CD4-positive, alpha-beta memory T cell (primary cell): ENCODE measurements at regions of chr12 and their contacts with region 1.

Region 1: GRCh38 chr12:71663561-71664294 is at the start of gene ZFC3H1:
- DNase-seq: peak; percentile 95 to 98 (median 97)
- H3K4me3 ChIP-seq: peak within 1 kb of the TSS; percentile 92 to 95
- H3K4me3 Mint-ChIP-seq: peak within 1 kb of the TSS; percentile 97 to 100 (median 99)
- H3K27ac ChIP-seq: peak within 1 kb of the TSS; percentile 96
- H3K27ac Mint-ChIP-seq: peak within 1 kb of the TSS; percentile 98 to 100 (median 100)
- H3K4me1 ChIP-seq: peaks cover 41% of the 10 kb centered on the region
- H3K4me1 Mint-ChIP-seq: peaks cover 30 to 69% (median 44%) of the 10 kb centered on the region in 4 donors
- H3K27me3 ChIP-seq: no peaks in the 10 kb centered on the region
- H3K27me3 Mint-ChIP-seq: no peaks in the 10 kb centered on the region
- total RNA-seq, gene ZFC3H1: 118 to 121 TPM

Region 2: DNA sequence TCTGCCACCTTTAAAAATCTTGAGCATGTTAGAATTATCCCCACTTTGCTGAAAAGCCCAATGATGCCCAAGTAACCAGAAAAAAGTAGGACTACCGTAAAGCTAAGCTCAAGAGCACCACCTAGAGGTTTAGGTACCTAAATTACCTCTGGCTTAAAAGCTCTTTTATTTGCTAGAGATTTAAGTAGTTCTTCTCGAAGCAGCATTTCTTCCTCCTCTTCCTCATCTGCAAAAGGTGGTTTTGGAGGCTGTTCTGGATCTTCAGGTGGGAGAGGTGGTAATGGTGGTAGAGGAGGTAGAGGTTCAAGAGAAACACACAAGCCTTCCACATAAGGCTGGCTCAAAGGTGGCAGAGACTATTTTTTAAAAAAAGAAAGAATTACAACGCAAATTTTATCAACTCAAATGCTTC is 27.0 kb before region 1 on chr12:
- CTCF ChIA-PET with region 1: interaction called, 28 read pairs
- POLR2A ChIA-PET with region 1: interaction called, 6 read pairs
- intact Hi-C with region 1: loop called (anchors 2 kb)
- DNase-seq: peak in 4 of 5 donors; percentile 52 to 59 (median 53)
- H3K4me3 ChIP-seq: no peak overlapping the region
- H3K4me3 Mint-ChIP-seq: no peak overlapping the region
- H3K27ac ChIP-seq: no peak overlapping the region
- H3K27ac Mint-ChIP-seq: peak overlapping the region; percentile 25 to 94 (median 83)
- H3K4me1 ChIP-seq: no peaks in the 10 kb centered on the region
- H3K4me1 Mint-ChIP-seq: peaks cover 6 to 17% (median 9%) of the 10 kb centered on the region in 4 donors
- H3K27me3 ChIP-seq: no peaks in the 10 kb centered on the region
- H3K27me3 Mint-ChIP-seq: no peaks in the 10 kb centered on the region

Region 3: GRCh38 chr12:71685914-71686665 is 22.4 kb after region 1 on chr12 and contains the start of gene TMEM19:
- CTCF ChIA-PET with region 1: interaction called, 60 read pairs
- POLR2A ChIA-PET with region 1: interaction called, 233 read pairs
- intact Hi-C with region 1: loop called (anchors 1 kb)
- DNase-seq: peak; percentile 82 to 86 (median 84)
- H3K4me3 ChIP-seq: peak within 1 kb of the TSS; percentile 47 to 73
- H3K4me3 Mint-ChIP-seq: peak within 1 kb of the TSS; percentile 92 to 99 (median 96)
- H3K27ac ChIP-seq: peak within 1 kb of the TSS; percentile 72
- H3K27ac Mint-ChIP-seq: peak within 1 kb of the TSS; percentile 80 to 98 (median 95)
- H3K4me1 ChIP-seq: peaks cover 27% of the 10 kb centered on the region
- H3K4me1 Mint-ChIP-seq: peaks cover 10 to 32% (median 17%) of the 10 kb centered on the region in 4 donors
- H3K27me3 ChIP-seq: no peaks in the 10 kb centered on the region
- H3K27me3 Mint-ChIP-seq: no peaks in the 10 kb centered on the region
- total RNA-seq, gene TMEM19: 10.5 to 14.1 TPM

Region 4: GRCh38 chr12:71754461-71755145 is 90.9 kb after region 1 on chr12 and contains the start of gene RAB21:
- CTCF ChIA-PET with region 1: interaction called, 7 read pairs
- POLR2A ChIA-PET with region 1: interaction called, 43 read pairs
- intact Hi-C with region 1: loop called (anchors 1 kb)
- DNase-seq: peak; percentile 97 to 99 (median 98)
- H3K4me3 ChIP-seq: peak within 1 kb of the TSS; percentile 66 to 82
- H3K4me3 Mint-ChIP-seq: peak within 1 kb of the TSS; percentile 93 to 97 (median 95)
- H3K27ac ChIP-seq: peak within 1 kb of the TSS; percentile 86
- H3K27ac Mint-ChIP-seq: peak within 1 kb of the TSS; percentile 97 to 99 (median 97)
- H3K4me1 ChIP-seq: peaks cover 36% of the 10 kb centered on the region
- H3K4me1 Mint-ChIP-seq: peaks cover 24 to 51% (median 39%) of the 10 kb centered on the region in 4 donors
- H3K27me3 ChIP-seq: peaks cover 3% of the 10 kb centered on the region
- H3K27me3 Mint-ChIP-seq: peaks cover 3 to 17% of the 10 kb centered on the region in 2 donors
- total RNA-seq, gene RAB21: 73.6 to 77.2 TPM

Region 5: GRCh38 chr12:71840231-71840847 is 176.6 kb after region 1 on chr12:
- CTCF ChIA-PET with region 1: interaction called, 3 read pairs
- POLR2A ChIA-PET with region 1: interaction called, 35 read pairs
- intact Hi-C with region 1: loop called (anchors 1 kb)
- DNase-seq: peak in 3 of 5 donors; percentile 6 to 21 (median 10)
- H3K4me3 ChIP-seq: peak overlapping the region; percentile 78 to 90
- H3K4me3 Mint-ChIP-seq: peak overlapping the region; percentile 90 to 98 (median 96)
- H3K27ac ChIP-seq: peak overlapping the region; percentile 98
- H3K27ac Mint-ChIP-seq: peak overlapping the region; percentile 94 to 99 (median 98)
- H3K4me1 ChIP-seq: peaks cover 53% of the 10 kb centered on the region
- H3K4me1 Mint-ChIP-seq: peaks cover 30 to 49% (median 40%) of the 10 kb centered on the region in 4 donors
- H3K27me3 ChIP-seq: no peaks in the 10 kb centered on the region
- H3K27me3 Mint-ChIP-seq: peaks cover 0 to 1% of the 10 kb centered on the region in 2 donors